A549 (cell line): ENCODE measurements at regions of chr1 and their contacts with region 1.

Region 1: GRCh38 chr1:42385283-42385682 is 4.7 kb downstream of the RIMKLA start:
- DNase-seq: peak in 1 of 2 experiments; percentile 36
- ATAC-seq: no peak
- H3K4me3 ChIP-seq: no peak overlapping the region
- H3K27ac ChIP-seq: peak overlapping the region; percentile 66 to 73
- H3K4me1 ChIP-seq: peaks cover 8% of the 10 kb centered on the region
- CTCF ChIP-seq: no peak
- EP300 ChIP-seq: no peak
- POLR2A ChIP-seq: no peak
- RAD21 ChIP-seq: no peak

Region 2: DNA sequence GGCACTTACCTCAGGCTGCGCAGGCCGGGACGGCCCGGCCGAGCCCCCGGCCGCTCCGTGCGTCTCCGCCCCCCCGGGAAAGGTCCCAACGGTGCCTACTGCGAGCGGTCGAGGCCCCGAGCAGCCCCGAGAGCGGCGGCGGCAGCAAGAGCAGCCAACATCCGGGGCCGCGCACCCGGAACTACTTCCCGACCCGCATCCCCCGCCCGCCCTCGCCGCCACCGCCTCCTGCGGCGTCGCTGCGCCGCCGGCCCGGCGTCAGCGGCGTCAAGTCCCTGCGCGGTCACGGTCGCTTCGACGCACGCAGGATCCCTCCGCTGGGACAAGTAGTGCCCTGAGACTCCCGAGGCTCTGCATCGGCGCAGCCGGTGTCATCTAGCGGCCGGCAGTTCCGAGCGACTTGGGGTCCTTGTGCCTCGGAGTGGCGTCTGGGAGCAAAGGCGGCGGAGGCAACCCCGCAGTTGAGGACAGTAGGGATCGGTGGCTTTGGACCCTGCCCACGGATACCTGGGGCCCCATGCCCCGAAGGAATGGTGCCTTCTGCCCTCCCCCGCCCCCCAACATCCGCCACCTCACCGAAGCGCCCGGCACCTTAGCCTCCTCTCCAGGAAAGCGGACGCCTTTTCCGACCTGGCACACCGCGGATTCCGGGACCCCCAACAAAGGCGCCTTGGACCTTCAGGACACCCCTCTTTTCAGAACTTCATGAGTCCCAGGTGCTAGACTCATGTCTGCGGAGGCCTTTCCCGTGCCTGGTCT is 50.1 kb before region 1 on chr1 and contains the start of gene FOXJ3:
- CTCF ChIA-PET with region 1: interaction called, 10 read pairs
- POLR2A ChIA-PET with region 1: no interaction called
- DNase-seq: peak; percentile 69 to 96
- ATAC-seq: peak; percentile 86 to 87
- H3K4me3 ChIP-seq: peak within 1 kb of the TSS; percentile 96
- H3K27ac ChIP-seq: peak within 1 kb of the TSS; percentile 99 to 100
- H3K4me1 ChIP-seq: peaks cover 47% of the 10 kb centered on the region
- CTCF ChIP-seq: no peak
- EP300 ChIP-seq: no peak
- POLR2A ChIP-seq: peak; percentile 49
- RAD21 ChIP-seq: peak in 1 of 2 experiments; percentile 20; a peak in 1 of 5 replicates
- polyA plus RNA-seq, gene FOXJ3: 45.0 and 53.1 TPM in 2 replicates